H1 (cell line): ENCODE measurements at regions of chr6 and their contacts with region 1.

Region 1: DNA sequence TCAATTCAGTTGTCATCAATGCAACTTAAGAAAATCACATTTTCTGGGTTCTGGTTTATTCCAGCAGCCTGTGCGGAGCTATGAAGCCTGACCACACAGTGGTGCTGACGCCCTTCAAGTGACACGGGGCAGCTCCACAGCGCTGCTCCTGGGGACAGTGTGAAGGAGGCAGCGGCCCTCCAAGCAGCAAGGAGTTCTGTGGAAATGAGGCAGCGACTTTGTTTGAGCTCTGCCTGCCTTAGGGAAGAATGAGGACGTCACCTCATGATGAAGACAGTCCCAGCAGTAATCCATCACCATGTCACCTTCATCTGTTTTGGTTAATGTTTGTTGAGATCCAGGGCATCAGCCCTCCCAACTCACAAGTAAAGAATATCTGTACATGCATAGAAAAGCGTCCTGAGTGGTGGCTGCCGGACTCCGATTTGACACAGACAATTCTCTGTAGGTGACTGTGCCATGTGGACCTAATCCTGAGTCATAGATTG is 168.5 kb upstream of the UST start:
- DNase-seq: peak; percentile 74 to 86
- H3K4me3 ChIP-seq: no peak overlapping the region
- H3K27ac ChIP-seq: no peak overlapping the region
- H3K4me1 ChIP-seq: peaks cover 0 to 6% (median 1%) of the 10 kb centered on the region in 4 experiments; a peak in 5 of 7 replicates
- H3K27me3 ChIP-seq: no peaks in the 10 kb centered on the region
- CTCF ChIP-seq: peak; percentile 92 to 100 (median 98)
- EP300 ChIP-seq: no peak
- POLR2A ChIP-seq: no peak
- RAD21 ChIP-seq: peak; percentile 100

Region 2: DNA sequence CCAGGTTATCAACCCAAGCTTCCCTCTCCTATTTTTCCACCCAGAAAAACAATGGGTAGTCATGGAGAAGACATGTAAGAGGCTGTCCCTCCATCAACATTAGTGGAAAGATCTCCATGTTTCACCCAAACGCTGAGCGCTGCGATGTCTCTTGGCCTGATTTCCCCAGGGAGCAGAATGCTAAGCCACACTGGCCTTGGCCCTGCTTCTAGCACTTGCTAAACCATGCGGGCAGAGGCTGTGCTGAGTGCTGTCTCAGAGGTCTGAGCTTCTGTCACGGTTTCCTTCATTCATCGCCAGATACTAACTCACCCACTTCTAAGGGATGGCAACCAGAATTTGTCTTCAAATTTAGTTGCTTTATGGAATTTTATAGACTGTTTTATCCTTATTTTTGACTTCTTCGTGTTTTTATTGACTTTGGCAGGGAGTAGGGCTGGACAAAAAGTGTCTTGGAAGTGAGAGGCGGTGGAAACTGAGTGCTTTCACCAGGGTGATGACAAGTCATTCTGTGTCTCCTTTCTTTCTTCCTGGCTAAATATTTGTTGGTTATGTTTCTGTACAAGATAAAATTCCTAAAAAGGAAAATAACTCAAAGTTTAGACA is 12.9 kb before region 1 on chr6:
- CTCF ChIA-PET with region 1: interaction called, 26 read pairs
- POLR2A ChIA-PET with region 1: no interaction called
- DNase-seq: no peak
- H3K4me3 ChIP-seq: no peak overlapping the region
- H3K27ac ChIP-seq: no peak overlapping the region
- H3K4me1 ChIP-seq: no peaks in the 10 kb centered on the region
- H3K27me3 ChIP-seq: peaks cover 0 to 5% (median 4%) of the 10 kb centered on the region in 4 experiments; a peak in 5 of 7 replicates
- CTCF ChIP-seq: no peak
- EP300 ChIP-seq: no peak
- POLR2A ChIP-seq: no peak
- RAD21 ChIP-seq: no peak

Region 3: GRCh38 chr6:148599967-148600426 is 21.7 kb after region 1 on chr6:
- CTCF ChIA-PET with region 1: interaction called, 17 read pairs
- POLR2A ChIA-PET with region 1: interaction called, 3 read pairs
- DNase-seq: peak; percentile 60 to 83
- H3K4me3 ChIP-seq: peak overlapping the region in 1 of 4 experiments; percentile 21; a peak in 1 of 8 replicates
- H3K27ac ChIP-seq: peak overlapping the region; percentile 75
- H3K4me1 ChIP-seq: peaks cover 3 to 13% (median 9%) of the 10 kb centered on the region in 4 experiments; a peak in 5 of 7 replicates
- H3K27me3 ChIP-seq: no peaks in the 10 kb centered on the region; a peak in 1 of 7 replicates
- CTCF ChIP-seq: no peak
- EP300 ChIP-seq: peak in 1 of 2 experiments; percentile 95; a peak in 2 of 3 replicates
- POLR2A ChIP-seq: no peak
- RAD21 ChIP-seq: no peak

Region 4: GRCh38 chr6:148746363-148747144 is 168.3 kb after region 1 on chr6 and contains the start of gene UST:
- CTCF ChIA-PET with region 1: interaction called, 16 read pairs
- POLR2A ChIA-PET with region 1: no interaction called
- DNase-seq: peak; percentile 82 to 85
- H3K4me3 ChIP-seq: peak within 1 kb of the TSS; percentile 87 to 97 (median 90)
- H3K27ac ChIP-seq: peak within 1 kb of the TSS; percentile 73; the same call in 1 of the 2 replicates
- H3K4me1 ChIP-seq: peaks cover 7 to 18% (median 11%) of the 10 kb centered on the region in 4 experiments
- H3K27me3 ChIP-seq: no peaks in the 10 kb centered on the region
- CTCF ChIP-seq: peak; percentile 11 to 41 (median 27)
- EP300 ChIP-seq: no peak
- POLR2A ChIP-seq: no peak
- RAD21 ChIP-seq: peak; percentile 66 to 68
- total RNA-seq, gene UST: 31.9 and 34.5 TPM in 2 replicates

Region 5: DNA sequence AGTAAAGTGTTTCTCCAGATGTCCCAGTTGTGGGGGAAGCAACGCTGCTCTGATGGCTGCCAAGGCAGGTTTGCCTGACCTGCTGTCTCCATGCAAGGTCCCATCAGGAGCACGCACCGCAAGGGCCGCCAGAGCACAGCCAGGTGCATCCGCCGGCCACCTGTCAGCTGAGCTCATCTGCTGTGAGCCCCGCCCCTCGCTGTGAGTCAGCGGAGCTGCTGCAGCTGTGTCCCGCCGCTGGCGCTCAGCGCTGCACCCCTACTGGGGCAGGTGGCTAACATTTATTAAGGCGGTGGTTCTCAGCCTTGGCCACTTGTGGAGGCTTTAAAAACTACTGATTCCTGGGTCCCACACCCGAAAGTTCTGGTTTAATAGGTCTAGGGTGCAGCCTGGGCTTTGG is 394.2 kb after region 1 on chr6:
- CTCF ChIA-PET with region 1: interaction called, 17 read pairs
- POLR2A ChIA-PET with region 1: no interaction called
- DNase-seq: peak; percentile 84 to 88
- H3K4me3 ChIP-seq: peak overlapping the region in 1 of 4 experiments; percentile 19; a peak in 3 of 8 replicates
- H3K27ac ChIP-seq: peak overlapping the region; percentile 54; the same call in 1 of the 2 replicates
- H3K4me1 ChIP-seq: peaks cover 12 to 40% (median 15%) of the 10 kb centered on the region in 4 experiments
- H3K27me3 ChIP-seq: no peaks in the 10 kb centered on the region
- CTCF ChIP-seq: peak in 2 of 3 experiments; percentile 14 to 22; a peak in 2 of 4 replicates
- EP300 ChIP-seq: no peak
- POLR2A ChIP-seq: peak in 1 of 2 experiments; percentile 61; a peak in 1 of 3 replicates
- RAD21 ChIP-seq: peak; percentile 22 to 28; a peak in 2 of 4 replicates